ENCODE measurements at regions of chr10 and their contacts with region 1.

Region 1: GRCh38 chr10:92087750-92088395 is 164.3 kb downstream of the BTAF1 start:
- DNase-seq: peak; percentile 84
- H3K4me3 ChIP-seq: no peak overlapping the region
- H3K4me3 Mint-ChIP-seq: peak overlapping the region; percentile 58
- H3K27ac Mint-ChIP-seq: peak overlapping the region; percentile 35
- H3K4me1 ChIP-seq: 0 out of 2 replicates have a peak, but pooled peaks cover 4% of the 10 kb centered on the region
- H3K4me1 Mint-ChIP-seq: peaks cover 7% of the 10 kb centered on the region
- H3K27me3 ChIP-seq: no peaks in the 10 kb centered on the region
- H3K27me3 Mint-ChIP-seq: no peaks in the 10 kb centered on the region
- CTCF ChIP-seq: peak; percentile 83 to 89

Region 2: DNA sequence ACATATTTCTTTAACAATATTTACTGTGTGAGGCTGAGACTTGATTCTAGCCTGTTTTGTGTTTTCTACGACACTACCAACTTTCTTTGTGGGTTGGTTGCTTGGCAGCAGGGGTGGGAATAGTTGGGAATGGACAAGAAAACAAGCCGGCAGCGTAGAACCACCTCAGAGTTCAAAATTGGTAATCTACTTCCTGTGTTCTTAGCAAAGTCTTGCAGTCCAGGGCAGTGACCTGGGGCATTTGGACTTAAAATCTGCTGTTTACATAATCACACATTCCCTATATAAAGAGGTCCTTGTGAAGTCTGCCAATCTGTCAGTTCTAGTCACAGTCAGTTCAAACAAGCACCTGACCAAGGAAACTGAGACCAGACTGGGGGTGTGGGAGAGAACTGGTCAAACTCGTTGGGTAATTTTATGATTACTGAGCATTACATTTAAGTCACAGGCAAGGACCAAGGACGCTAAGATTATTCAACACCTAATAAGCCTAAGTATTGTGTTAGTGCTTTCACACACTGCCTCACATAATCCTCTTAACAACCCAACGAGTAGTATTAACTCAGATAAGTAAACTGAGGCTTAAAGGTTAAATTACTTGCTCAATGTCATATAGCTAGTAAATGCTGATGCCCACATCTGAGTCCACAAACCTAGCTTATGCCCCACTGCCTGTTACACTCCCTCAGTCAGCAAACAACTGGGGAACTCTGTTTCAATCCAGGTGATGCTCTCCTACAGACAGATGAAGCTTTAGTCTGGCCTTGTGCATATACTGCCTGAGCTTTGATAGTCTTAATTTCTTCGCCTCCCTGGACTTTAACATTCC is 35.3 kb after region 1 on chr10:
- CTCF ChIA-PET with region 1: interaction called, 3 read pairs
- POLR2A ChIA-PET with region 1: no interaction called
- intact Hi-C with region 1: loop called (anchors 2 kb)
- DNase-seq: peak; percentile 42 to 53
- H3K4me3 ChIP-seq: no peak overlapping the region
- H3K4me3 Mint-ChIP-seq: no peak overlapping the region
- H3K27ac Mint-ChIP-seq: peak overlapping the region; percentile 9
- H3K4me1 ChIP-seq: peaks cover 20% of the 10 kb centered on the region
- H3K4me1 Mint-ChIP-seq: peaks cover 18% of the 10 kb centered on the region
- H3K27me3 ChIP-seq: no peaks in the 10 kb centered on the region
- H3K27me3 Mint-ChIP-seq: no peaks in the 10 kb centered on the region
- CTCF ChIP-seq: no peak

Region 3: GRCh38 chr10:92203919-92204623 is 116.2 kb after region 1 on chr10:
- CTCF ChIA-PET with region 1: interaction called, 14 read pairs
- POLR2A ChIA-PET with region 1: no interaction called
- intact Hi-C with region 1: no loop called
- DNase-seq: peak in 1 of 2 experiments; percentile 24
- H3K4me3 ChIP-seq: no peak overlapping the region
- H3K4me3 Mint-ChIP-seq: no peak overlapping the region
- H3K27ac Mint-ChIP-seq: no peak overlapping the region
- H3K4me1 ChIP-seq: no peaks in the 10 kb centered on the region
- H3K4me1 Mint-ChIP-seq: peaks cover 8% of the 10 kb centered on the region
- H3K27me3 ChIP-seq: no peaks in the 10 kb centered on the region
- H3K27me3 Mint-ChIP-seq: no peaks in the 10 kb centered on the region
- CTCF ChIP-seq: peak in 1 of 2 experiments; percentile 14

Region 4: DNA sequence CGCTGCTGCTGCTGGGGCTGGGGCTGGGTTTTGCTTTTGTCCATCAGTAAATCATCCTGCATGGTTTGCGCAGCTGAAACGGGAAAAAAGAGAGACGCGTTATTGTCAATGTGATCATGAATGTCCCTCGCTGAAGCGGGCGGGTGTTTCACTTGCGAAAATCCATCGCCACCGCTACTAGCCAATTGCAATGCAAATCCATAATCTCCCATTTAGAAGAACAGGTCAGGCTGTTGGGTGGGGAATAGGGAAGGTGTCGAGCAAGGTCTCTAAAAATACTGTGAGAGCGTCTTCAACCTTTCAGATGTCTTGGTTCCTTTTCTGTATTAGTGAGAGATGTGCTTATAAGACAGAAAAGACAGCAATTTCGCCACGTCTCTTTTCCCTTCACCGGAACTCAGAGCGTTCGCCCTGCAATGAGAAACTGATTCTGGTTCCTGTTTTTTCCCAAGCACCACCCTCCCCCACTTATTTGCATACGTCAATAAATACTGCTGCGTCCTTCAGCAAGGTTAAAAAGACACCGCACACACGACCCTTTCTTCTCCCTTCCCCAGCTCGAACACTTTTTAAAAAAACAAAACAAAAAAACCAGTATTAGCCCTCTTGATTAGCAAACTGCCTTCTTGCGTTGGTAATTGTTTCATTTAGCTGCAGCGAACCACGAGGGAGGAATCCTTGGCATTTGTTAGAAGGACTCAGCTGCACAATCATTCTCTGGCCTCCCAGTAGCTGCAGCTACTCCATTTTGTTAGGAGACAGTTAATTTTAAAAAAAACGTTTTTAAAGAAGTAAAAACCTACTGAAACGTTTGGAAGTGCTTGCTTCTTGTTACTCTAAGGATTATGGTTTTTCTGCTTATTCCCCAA is 152.7 kb after region 1 on chr10:
- CTCF ChIA-PET with region 1: interaction called, 3 read pairs
- POLR2A ChIA-PET with region 1: no interaction called
- intact Hi-C with region 1: loop called (anchors 1 kb)
- DNase-seq: peak; percentile 42 to 43
- H3K4me3 ChIP-seq: peak overlapping the region; percentile 69
- H3K4me3 Mint-ChIP-seq: peak overlapping the region; percentile 89
- H3K27ac Mint-ChIP-seq: peak overlapping the region; percentile 33
- H3K4me1 ChIP-seq: peaks cover 14% of the 10 kb centered on the region
- H3K4me1 Mint-ChIP-seq: peaks cover 24% of the 10 kb centered on the region
- H3K27me3 ChIP-seq: no peaks in the 10 kb centered on the region
- H3K27me3 Mint-ChIP-seq: peaks cover 6% of the 10 kb centered on the region
- CTCF ChIP-seq: no peak

Region 5: GRCh38 chr10:92290837-92291615 is 203.2 kb after region 1 on chr10 and contains the starts of genes CPEB3 and MARCHF5:
- CTCF ChIA-PET with region 1: interaction called, 25 read pairs
- POLR2A ChIA-PET with region 1: interaction called, 8 read pairs
- intact Hi-C with region 1: loop called (anchors 1 kb)
- DNase-seq: peak; percentile 97 to 98
- H3K4me3 ChIP-seq: peak within 1 kb of the TSS; percentile 100
- H3K4me3 Mint-ChIP-seq: peak within 1 kb of the TSS; percentile 97
- H3K27ac Mint-ChIP-seq: peak within 1 kb of the TSS; percentile 92
- H3K4me1 ChIP-seq: peaks cover 7% of the 10 kb centered on the region; the same call in 1 of the 2 replicates
- H3K4me1 Mint-ChIP-seq: no peaks in the 10 kb centered on the region
- H3K27me3 ChIP-seq: no peaks in the 10 kb centered on the region
- H3K27me3 Mint-ChIP-seq: no peaks in the 10 kb centered on the region
- CTCF ChIP-seq: peak; percentile 56 to 81
- total RNA-seq, gene CPEB3: 2.3 TPM in 2 replicates
- total RNA-seq, gene MARCHF5: 30.4 and 33.9 TPM in 2 replicates

Region 6: DNA sequence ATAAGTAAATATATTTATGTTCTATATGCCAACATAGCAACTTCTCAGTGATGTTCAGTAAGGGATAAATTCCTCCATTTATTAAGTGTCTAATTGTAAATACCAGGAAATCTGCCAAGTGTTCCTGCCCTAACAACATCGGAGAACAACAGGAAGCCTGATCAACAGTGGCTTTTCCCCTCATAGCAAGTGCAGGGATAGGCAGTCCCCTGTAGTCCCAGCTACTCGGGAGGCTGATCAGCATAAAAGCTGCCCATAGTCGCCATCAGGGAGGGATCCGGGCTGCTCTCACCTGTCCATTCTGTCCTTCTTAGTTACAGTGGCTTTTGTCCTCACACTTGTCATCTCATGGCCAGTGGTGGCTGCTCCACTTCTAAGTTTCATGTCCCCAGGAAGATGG is 344.7 kb after region 1 on chr10:
- CTCF ChIA-PET with region 1: interaction called, 4 read pairs
- POLR2A ChIA-PET with region 1: no interaction called
- intact Hi-C with region 1: loop called (anchors 1 kb)
- DNase-seq: no peak
- H3K4me3 ChIP-seq: no peak overlapping the region
- H3K4me3 Mint-ChIP-seq: no peak overlapping the region
- H3K27ac Mint-ChIP-seq: no peak overlapping the region
- H3K4me1 ChIP-seq: no peaks in the 10 kb centered on the region
- H3K4me1 Mint-ChIP-seq: no peaks in the 10 kb centered on the region
- H3K27me3 ChIP-seq: no peaks in the 10 kb centered on the region
- H3K27me3 Mint-ChIP-seq: no peaks in the 10 kb centered on the region
- CTCF ChIP-seq: no peak

Measured in Caco-2 (cell line).